ENCODE measurements at regions of chr9 and their contacts with region 1.

Region 1: GRCh38 chr9:94084314-94084713 is at the start of gene PTPDC1:
- DNase-seq: no peak
- ATAC-seq: no peak
- H3K4me3 Mint-ChIP-seq: no peak within 1 kb of the TSS
- H3K27ac Mint-ChIP-seq: no peak within 1 kb of the TSS
- H3K4me1 Mint-ChIP-seq: peaks cover 7% of the 10 kb centered on the region
- H3K27me3 Mint-ChIP-seq: no peaks in the 10 kb centered on the region
- total RNA-seq, gene PTPDC1: 5.5 to 5.7 TPM

Region 2: DNA sequence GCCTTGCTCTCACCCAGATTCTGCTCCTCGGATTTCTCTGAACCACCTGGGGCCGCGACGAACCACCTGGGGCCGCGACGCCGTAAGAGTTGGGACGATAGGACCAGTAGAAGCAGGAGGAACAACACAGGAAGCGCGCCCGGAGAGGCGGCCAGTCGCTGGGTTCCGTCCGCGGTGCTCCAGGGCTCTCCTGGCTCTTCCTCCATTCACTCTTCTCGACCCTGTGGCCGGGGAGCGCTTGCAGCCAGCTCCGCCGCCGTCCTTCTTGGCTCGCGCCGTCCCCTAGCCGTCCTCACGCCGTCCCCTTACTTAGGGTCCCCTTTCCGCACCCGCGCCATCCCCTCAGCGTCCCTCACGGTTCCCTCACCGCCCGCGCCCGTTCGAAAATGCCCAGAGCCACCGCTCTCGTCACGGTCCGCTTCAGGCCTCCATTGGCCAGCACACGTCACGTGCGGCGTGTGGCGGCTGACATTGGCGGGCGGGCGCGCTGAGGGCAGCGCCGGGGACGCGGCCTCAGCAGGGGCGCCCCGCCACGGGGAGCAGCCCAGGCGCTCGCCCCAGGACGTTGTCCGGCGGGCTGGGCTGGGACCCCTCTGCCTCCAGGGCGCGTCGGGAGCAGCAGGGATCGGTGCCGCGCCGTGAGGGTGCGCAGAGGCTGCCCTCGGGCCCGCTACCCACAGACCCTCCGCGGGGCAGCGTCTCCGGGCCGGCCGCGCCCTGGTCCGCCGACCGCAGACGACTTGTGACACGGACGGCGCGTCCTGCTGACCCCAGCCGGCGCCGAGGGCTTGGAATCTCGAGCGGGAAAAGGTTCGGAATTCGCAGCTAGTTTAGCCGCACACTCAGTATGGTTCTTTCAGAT is 53.8 kb before region 1 on chr9:
- CTCF ChIA-PET with region 1: no interaction called
- POLR2A ChIA-PET with region 1: no interaction called
- DNase-seq: peak; percentile 84
- ATAC-seq: peak; percentile 100
- H3K4me3 Mint-ChIP-seq: peak overlapping the region; percentile 95
- H3K27ac Mint-ChIP-seq: peak overlapping the region; percentile 97
- H3K4me1 Mint-ChIP-seq: peaks cover 21% of the 10 kb centered on the region
- H3K27me3 Mint-ChIP-seq: peaks cover 10% of the 10 kb centered on the region

Region 3: GRCh38 chr9:94065535-94065961 is 18.8 kb before region 1 on chr9:
- CTCF ChIA-PET with region 1: interaction called, 17 read pairs
- POLR2A ChIA-PET with region 1: no interaction called
- DNase-seq: peak; percentile 85
- ATAC-seq: peak; percentile 67
- H3K4me3 Mint-ChIP-seq: no peak overlapping the region
- H3K27ac Mint-ChIP-seq: no peak overlapping the region
- H3K4me1 Mint-ChIP-seq: peaks cover 4% of the 10 kb centered on the region
- H3K27me3 Mint-ChIP-seq: no peaks in the 10 kb centered on the region

Region 4: DNA sequence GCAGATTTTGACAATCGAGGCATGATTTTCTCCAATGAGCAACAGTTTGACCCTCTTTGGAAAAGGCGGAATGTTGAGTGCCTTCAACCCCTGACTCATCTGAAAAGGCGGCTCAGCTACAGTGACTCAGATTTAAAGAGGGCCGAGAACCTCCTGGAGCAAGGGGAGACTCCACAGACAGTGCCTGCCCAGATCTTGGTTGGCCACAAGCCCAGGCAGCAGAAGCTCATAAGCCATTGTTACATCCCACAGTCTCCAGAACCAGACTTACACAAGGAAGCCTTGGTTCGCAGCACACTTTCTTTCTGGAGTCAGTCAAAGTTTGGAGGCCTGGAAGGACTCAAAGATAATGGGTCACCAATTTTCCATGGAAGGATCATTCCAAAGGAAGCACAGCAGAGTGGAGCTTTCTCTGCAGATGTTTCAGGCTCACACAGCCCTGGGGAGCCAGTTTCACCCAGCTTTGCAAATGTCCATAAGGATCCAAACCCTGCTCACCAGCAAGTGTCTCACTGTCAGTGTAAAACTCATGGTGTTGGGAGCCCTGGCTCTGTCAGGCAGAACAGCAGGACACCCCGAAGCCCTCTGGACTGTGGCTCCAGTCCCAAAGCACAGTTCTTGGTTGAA is 13.6 kb after region 1 on chr9:
- CTCF ChIA-PET with region 1: no interaction called
- POLR2A ChIA-PET with region 1: interaction called, 11 read pairs
- DNase-seq: no peak
- ATAC-seq: no peak
- H3K4me3 Mint-ChIP-seq: no peak overlapping the region
- H3K27ac Mint-ChIP-seq: no peak overlapping the region
- H3K4me1 Mint-ChIP-seq: peaks cover 11% of the 10 kb centered on the region
- H3K27me3 Mint-ChIP-seq: no peaks in the 10 kb centered on the region

Region 5: GRCh38 chr9:94108584-94108983 is 24.3 kb after region 1 on chr9:
- CTCF ChIA-PET with region 1: no interaction called
- POLR2A ChIA-PET with region 1: no interaction called
- DNase-seq: no peak
- ATAC-seq: no peak
- H3K4me3 Mint-ChIP-seq: no peak overlapping the region
- H3K27ac Mint-ChIP-seq: no peak overlapping the region
- H3K4me1 Mint-ChIP-seq: peaks cover 6% of the 10 kb centered on the region
- H3K27me3 Mint-ChIP-seq: no peaks in the 10 kb centered on the region